A549 (cell line): ENCODE measurements at regions of chr5 and their contacts with region 1.

Region 1: GRCh38 chr5:149212198-149212951 is 59.3 kb upstream of the AFAP1L1 start:
- DNase-seq: no peak
- ATAC-seq: no peak
- H3K4me3 ChIP-seq: no peak overlapping the region
- H3K27ac ChIP-seq: no peak overlapping the region
- H3K4me1 ChIP-seq: no peaks in the 10 kb centered on the region
- CTCF ChIP-seq: no peak
- EP300 ChIP-seq: no peak
- POLR2A ChIP-seq: no peak
- RAD21 ChIP-seq: no peak

Region 2: DNA sequence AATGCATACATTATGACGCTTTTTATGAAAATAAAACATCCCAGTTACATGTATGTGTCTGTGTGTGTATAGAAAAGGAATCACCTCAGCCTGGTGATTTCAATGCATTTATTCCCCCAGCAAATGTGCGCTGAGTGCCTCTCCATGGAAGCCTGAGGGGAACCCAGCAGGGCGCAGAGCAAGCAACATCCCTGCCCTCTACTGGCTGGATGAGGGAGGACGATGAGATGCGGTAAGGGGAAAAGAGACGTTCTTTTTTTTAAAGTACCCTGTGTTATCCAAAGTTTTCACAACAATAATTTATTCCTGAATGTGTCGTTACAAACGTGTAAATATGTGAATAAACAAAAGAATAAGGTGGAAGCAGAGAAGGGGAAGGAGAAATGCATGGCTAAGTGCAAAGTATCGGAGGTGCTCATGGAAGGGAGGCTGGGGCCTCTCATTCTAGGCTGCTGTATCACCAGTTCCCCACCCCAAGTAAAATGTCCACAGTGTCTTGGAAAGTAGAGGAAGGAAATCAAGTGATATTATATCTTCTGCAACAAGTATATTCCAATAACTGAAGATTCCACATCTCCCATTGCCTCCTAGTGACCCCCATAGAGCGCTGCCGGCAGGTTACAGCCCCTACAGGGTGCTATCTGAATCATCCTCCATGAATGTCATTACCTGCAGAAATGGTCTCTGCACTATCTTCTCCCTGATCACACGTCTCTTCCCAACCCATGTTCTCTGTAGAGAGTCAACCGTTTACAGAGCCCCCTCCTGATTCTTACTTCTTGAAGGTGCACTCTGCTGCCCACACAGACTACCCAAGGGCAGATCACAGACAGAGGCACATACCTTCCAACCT is 84.1 kb before region 1 on chr5:
- CTCF ChIA-PET with region 1: interaction called, 11 read pairs
- POLR2A ChIA-PET with region 1: no interaction called
- DNase-seq: peak; percentile 30 to 76
- ATAC-seq: peak; percentile 88 to 97
- H3K4me3 ChIP-seq: no peak overlapping the region
- H3K27ac ChIP-seq: no peak overlapping the region
- H3K4me1 ChIP-seq: no peaks in the 10 kb centered on the region
- CTCF ChIP-seq: peak; percentile 60
- EP300 ChIP-seq: no peak
- POLR2A ChIP-seq: no peak
- RAD21 ChIP-seq: peak; percentile 31 to 57; a peak in 4 of 5 replicates